Ovary (tissue), 10 donors: ENCODE measurements at regions of chr3 and their contacts with region 1.

Region 1: DNA sequence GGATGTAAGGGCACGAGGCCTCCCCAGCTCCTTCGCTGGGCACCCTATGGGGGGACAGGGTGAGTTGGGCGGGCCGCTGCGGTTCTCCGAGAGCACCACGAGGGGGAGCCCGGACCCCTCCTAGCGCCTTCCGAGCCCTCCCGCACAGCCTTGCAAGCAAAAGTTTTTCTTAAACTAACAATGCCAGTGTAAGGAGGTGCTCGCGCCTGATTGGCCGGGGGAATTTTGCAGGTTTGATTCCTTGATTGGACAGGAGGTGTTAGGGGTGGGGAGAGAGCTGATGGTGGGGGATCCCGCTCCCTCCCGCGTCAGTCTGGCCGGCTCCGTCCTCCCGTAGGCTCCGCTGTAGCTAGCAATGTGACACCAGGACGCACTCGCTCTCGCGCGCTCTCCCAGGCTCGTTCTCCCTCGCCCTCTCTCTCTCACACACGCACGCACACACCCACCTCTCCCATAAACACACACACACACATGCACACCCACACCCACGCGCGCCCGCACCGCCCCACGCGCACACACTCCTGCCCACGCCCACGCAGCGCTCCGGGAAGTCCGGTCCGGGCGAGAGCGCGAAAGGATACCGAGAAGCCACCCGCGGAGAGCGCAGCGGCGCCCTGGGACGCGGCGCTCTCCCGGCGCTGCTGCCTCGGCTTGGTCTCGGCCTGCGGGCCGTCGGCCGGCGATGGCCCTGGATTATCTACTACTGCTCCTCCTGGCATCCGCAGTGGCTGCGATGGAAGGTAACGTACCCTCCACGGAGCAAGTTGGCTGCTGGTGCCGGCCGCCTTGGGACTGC is at the start of gene EPHB1:
- DNase-seq: peak; percentile 49 to 85 (median 74)
- H3K4me3 ChIP-seq: peak within 1 kb of the TSS; percentile 44
- H3K27ac ChIP-seq: no peak within 1 kb of the TSS
- H3K4me1 ChIP-seq: peaks cover 2% of the 10 kb centered on the region
- H3K27me3 ChIP-seq: no peaks in the 10 kb centered on the region
- CTCF ChIP-seq: peak; percentile 26 to 54 (median 39)
- EP300 ChIP-seq: no peak
- POLR2A ChIP-seq: no peak
- total RNA-seq, gene EPHB1: 0.58 to 2.1 (median 1.0) TPM

Region 2: GRCh38 chr3:134576426-134576825 is 218.7 kb before region 1 on chr3:
- intact Hi-C with region 1: no loop called
- DNase-seq: no peak
- H3K4me3 ChIP-seq: no peak overlapping the region
- H3K27ac ChIP-seq: no peak overlapping the region
- H3K4me1 ChIP-seq: no peaks in the 10 kb centered on the region
- H3K27me3 ChIP-seq: no peaks in the 10 kb centered on the region
- CTCF ChIP-seq: no peak
- EP300 ChIP-seq: no peak
- POLR2A ChIP-seq: no peak

Region 3: DNA sequence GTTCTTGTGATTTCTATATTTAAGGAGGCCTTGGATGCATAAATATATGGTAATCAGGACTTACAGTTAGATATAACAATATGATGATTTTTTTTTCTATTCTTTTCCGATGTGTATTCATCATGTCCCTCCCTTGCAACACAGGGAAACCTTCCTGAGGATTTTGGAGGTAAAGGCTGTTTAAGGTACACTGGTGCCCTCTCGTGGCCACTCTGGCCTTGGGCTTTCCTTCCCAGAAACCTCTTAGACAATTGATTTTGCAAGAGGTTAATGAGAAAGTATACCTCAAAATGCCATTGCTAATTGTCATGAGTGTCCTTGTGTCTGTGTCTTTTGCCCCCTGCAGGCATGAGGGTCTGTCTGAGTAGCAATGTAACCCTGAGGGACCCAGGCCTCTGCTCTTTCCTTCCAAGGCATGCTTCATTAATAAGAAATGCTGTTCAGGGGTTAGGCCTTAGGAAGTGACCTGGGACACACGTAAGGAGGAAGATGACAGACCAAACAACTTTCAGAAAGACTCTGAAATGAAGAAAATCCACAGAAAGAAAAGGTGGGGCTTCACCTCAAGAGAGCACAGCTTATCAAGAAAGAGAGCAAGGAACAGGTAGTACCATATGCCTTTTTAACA is 1100.1 kb after region 1 on chr3:
- intact Hi-C with region 1: loop called in 3 of 4 experiments (anchors 5 to 10 kb)
- DNase-seq: peak; percentile 48 to 83 (median 70)
- H3K4me3 ChIP-seq: no peak overlapping the region
- H3K27ac ChIP-seq: no peak overlapping the region
- H3K4me1 ChIP-seq: no peaks in the 10 kb centered on the region
- H3K27me3 ChIP-seq: no peaks in the 10 kb centered on the region
- CTCF ChIP-seq: peak in 1 of 3 donors; percentile 47
- EP300 ChIP-seq: no peak
- POLR2A ChIP-seq: no peak